IMR-90 (cell line): ENCODE measurements at regions of chr11 and their contacts with region 1.

Region 1: GRCh38 chr11:27934830-27935145 is 173.2 kb downstream of the KIF18A start:
- DNase-seq: peak; percentile 98
- ATAC-seq: peak; percentile 69
- H3K4me3 ChIP-seq: peak overlapping the region; percentile 11; the same call in 1 of the 2 replicates
- H3K27ac ChIP-seq: peak overlapping the region; percentile 90
- H3K4me1 ChIP-seq: peaks cover 6% of the 10 kb centered on the region
- H3K27me3 ChIP-seq: no peaks in the 10 kb centered on the region
- CTCF ChIP-seq: no peak
- POLR2A ChIP-seq: no peak; the same call in none of the 2 replicates
- RAD21 ChIP-seq: peak; percentile 29; the same call in 1 of the 2 replicates

Region 2: DNA sequence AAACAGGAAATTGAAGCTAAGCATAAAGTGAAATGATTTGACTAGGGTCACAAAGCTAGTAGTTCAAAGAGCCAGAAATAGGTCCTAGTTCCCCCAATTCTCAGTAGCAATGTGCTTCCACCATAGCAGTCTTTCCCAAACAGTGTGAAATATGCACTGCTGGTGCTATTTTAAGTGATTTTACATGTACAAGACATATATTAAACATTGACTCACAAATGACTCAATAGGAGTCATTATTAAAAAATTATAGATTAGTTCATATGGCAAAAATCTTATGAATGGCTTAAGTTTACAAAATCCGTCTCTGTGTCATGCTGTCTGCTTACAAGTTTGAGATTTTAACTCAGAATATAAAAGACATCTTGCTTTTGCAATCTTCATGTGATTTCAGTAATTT is 151.8 kb after region 1 on chr11:
- CTCF ChIA-PET with region 1: no interaction called
- POLR2A ChIA-PET with region 1: no interaction called
- dilution Hi-C with region 1: no loop called
- in situ Hi-C with region 1: no loop called
- intact Hi-C with region 1: loop called (anchors 2 kb)
- DNase-seq: peak; percentile 92
- ATAC-seq: peak; percentile 81
- H3K4me3 ChIP-seq: no peak overlapping the region
- H3K27ac ChIP-seq: no peak overlapping the region; the same call in 1 of the 2 replicates
- H3K4me1 ChIP-seq: peaks cover 3% of the 10 kb centered on the region; the same call in 1 of the 2 replicates
- H3K27me3 ChIP-seq: no peaks in the 10 kb centered on the region
- CTCF ChIP-seq: no peak
- POLR2A ChIP-seq: no peak
- RAD21 ChIP-seq: peak; percentile 19; the same call in 1 of the 2 replicates

Region 3: DNA sequence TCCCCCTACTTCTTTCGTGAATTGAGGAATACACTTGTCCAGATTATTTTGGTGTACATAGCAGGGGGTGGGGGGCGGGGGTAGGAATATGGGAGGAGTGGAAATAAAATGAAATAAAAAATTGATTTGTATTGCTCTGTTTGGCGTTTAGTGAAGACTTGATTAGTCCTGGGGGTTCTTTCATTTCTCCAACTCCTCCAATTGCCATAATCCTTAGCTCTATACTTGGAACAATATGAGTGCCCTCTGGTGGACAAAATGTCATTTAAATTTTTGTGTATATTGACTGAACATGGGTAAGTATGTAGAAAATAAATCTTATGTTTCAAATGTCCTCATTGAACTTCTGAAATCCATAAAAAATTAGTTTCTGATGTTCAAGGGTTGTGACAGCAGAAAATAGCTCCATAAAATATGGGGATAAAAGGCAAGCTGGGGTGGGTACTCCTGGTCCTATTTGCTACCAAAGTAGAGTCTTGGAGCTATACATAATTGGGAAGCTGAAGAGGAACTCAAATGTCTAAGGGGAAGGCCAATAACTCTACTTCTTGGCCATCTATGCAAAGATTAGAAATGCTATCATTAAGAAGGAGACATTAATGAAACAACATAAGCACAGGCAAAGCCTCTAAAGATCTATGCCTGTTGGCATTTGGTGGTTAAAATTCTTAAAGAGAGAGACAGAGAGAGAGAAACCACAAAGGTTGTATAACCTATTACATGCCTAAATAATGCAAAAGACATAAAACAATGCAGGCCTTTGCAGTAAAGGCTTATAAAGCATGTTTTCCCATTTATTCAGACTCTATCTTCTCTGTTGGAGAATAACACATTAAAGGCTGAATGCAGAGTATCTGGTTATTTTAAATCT is 595.0 kb after region 1 on chr11:
- CTCF ChIA-PET with region 1: no interaction called
- POLR2A ChIA-PET with region 1: no interaction called
- dilution Hi-C with region 1: no loop called
- in situ Hi-C with region 1: no loop called
- intact Hi-C with region 1: loop called (anchors 10 kb)
- DNase-seq: peak; percentile 82
- ATAC-seq: peak; percentile 64
- H3K4me3 ChIP-seq: no peak overlapping the region
- H3K27ac ChIP-seq: peak overlapping the region; percentile 19; the same call in 1 of the 2 replicates
- H3K4me1 ChIP-seq: peaks cover 3% of the 10 kb centered on the region; the same call in 1 of the 2 replicates
- H3K27me3 ChIP-seq: no peaks in the 10 kb centered on the region
- CTCF ChIP-seq: peak; percentile 57
- POLR2A ChIP-seq: no peak
- RAD21 ChIP-seq: peak; percentile 59